ENCODE measurements at regions of chr14 and their contacts with region 1.

Region 1: GRCh38 chr14:30759172-30760125 is 114.9 kb upstream of the COCH start:
- DNase-seq: no peak
- ATAC-seq: no peak
- H3K4me3 ChIP-seq: no peak overlapping the region
- H3K27ac ChIP-seq: no peak overlapping the region
- H3K4me1 ChIP-seq: no peaks in the 10 kb centered on the region
- H3K27me3 ChIP-seq: 0 out of 5 replicates have a peak, but pooled peaks cover 0 to 6% of the 10 kb centered on the region in 2 experiments
- CTCF ChIP-seq: no peak
- EP300 ChIP-seq: no peak
- POLR2A ChIP-seq: no peak
- RAD21 ChIP-seq: no peak

Region 2: GRCh38 chr14:30874120-30874998 is 114.9 kb after region 1 on chr14 and contains the start of gene COCH:
- CTCF ChIA-PET with region 1: no interaction called
- POLR2A ChIA-PET with region 1: interaction called, 3 read pairs
- in situ Hi-C with region 1: no loop called
- intact Hi-C with region 1: loop called (anchors 5 kb)
- DNase-seq: peak; percentile 80 to 85 (median 82)
- ATAC-seq: peak; percentile 89
- H3K4me3 ChIP-seq: peak within 1 kb of the TSS; percentile 70
- H3K27ac ChIP-seq: peak within 1 kb of the TSS; percentile 82
- H3K4me1 ChIP-seq: peaks cover 15 to 22% of the 10 kb centered on the region in 2 experiments; a peak in 4 of 5 replicates
- H3K27me3 ChIP-seq: no peaks in the 10 kb centered on the region
- CTCF ChIP-seq: peak; percentile 37 to 61 (median 48); a peak in 3 of 6 replicates
- EP300 ChIP-seq: no peak
- POLR2A ChIP-seq: peak; percentile 85
- RAD21 ChIP-seq: peak in 1 of 2 experiments; percentile 26; a peak in 1 of 4 replicates
- polyA plus RNA-seq, gene COCH: 27.0 to 36.8 TPM